ENCODE measurements at regions of chr12 and their contacts with region 1.

Region 1: GRCh38 chr12:67640863-67641262 is 7.7 kb upstream of the DYRK2 start:
- DNase-seq: no peak
- H3K4me3 ChIP-seq: no peak overlapping the region
- H3K4me3 Mint-ChIP-seq: no peak overlapping the region
- H3K27ac Mint-ChIP-seq: no peak overlapping the region
- H3K4me1 ChIP-seq: no peaks in the 10 kb centered on the region
- H3K4me1 Mint-ChIP-seq: no peaks in the 10 kb centered on the region
- H3K27me3 ChIP-seq: no peaks in the 10 kb centered on the region
- H3K27me3 Mint-ChIP-seq: peaks cover 6% of the 10 kb centered on the region
- CTCF ChIP-seq: no peak

Region 2: DNA sequence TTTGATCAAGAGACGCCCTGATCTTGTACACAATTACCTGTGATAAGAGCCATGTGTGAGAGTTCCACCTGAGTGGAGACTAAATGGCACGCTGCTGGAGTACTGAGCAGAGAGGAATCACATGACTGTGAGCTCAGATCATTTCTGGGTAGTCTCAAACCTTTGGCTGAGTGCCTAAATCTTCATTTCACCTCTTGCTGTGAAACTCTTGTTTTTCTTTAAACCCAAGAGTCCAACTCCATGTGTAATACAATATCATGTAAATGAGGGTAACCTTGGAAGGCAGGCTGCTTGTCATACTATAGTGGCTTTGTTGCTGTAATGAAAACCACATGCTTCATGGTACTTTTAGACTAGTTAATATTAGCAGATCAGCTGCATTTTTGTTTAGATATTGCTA is 214.8 kb before region 1 on chr12:
- CTCF ChIA-PET with region 1: no interaction called
- POLR2A ChIA-PET with region 1: no interaction called
- intact Hi-C with region 1: no loop called
- DNase-seq: no peak
- H3K4me3 ChIP-seq: no peak overlapping the region
- H3K4me3 Mint-ChIP-seq: no peak overlapping the region
- H3K27ac Mint-ChIP-seq: no peak overlapping the region
- H3K4me1 ChIP-seq: peaks cover 9% of the 10 kb centered on the region
- H3K4me1 Mint-ChIP-seq: no peaks in the 10 kb centered on the region
- H3K27me3 ChIP-seq: no peaks in the 10 kb centered on the region
- H3K27me3 Mint-ChIP-seq: no peaks in the 10 kb centered on the region
- CTCF ChIP-seq: no peak

Region 3: DNA sequence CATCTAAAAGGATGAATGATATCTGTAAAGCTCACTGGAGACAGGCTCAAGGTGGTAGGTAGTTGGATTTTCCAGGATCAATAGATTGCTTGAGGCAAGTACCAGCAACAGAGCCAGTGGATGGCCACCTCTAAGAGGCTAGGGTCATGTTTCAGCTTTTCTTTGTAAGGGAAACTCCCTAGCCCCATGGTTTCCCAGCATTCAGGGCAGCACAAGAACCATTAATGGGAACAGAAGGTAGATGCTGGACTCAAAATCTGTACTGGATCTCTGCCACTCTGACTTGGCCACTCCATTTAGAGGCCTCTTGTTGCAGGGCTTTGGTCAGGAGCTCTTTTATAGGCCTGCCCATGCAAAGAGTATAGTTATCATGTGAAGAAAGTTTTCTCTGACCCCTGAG is 68.4 kb before region 1 on chr12:
- CTCF ChIA-PET with region 1: no interaction called
- POLR2A ChIA-PET with region 1: no interaction called
- intact Hi-C with region 1: loop called (anchors 2 kb)
- DNase-seq: no peak
- H3K4me3 ChIP-seq: no peak overlapping the region
- H3K4me3 Mint-ChIP-seq: no peak overlapping the region
- H3K27ac Mint-ChIP-seq: no peak overlapping the region
- H3K4me1 ChIP-seq: no peaks in the 10 kb centered on the region
- H3K4me1 Mint-ChIP-seq: no peaks in the 10 kb centered on the region
- H3K27me3 ChIP-seq: no peaks in the 10 kb centered on the region
- H3K27me3 Mint-ChIP-seq: peaks cover 10% of the 10 kb centered on the region
- CTCF ChIP-seq: no peak

Region 4: GRCh38 chr12:67981287-67982162 is 340.7 kb after region 1 on chr12:
- CTCF ChIA-PET with region 1: no interaction called
- POLR2A ChIA-PET with region 1: no interaction called
- intact Hi-C with region 1: no loop called
- DNase-seq: no peak
- H3K4me3 ChIP-seq: no peak overlapping the region
- H3K4me3 Mint-ChIP-seq: no peak overlapping the region
- H3K27ac Mint-ChIP-seq: no peak overlapping the region
- H3K4me1 ChIP-seq: no peaks in the 10 kb centered on the region
- H3K4me1 Mint-ChIP-seq: no peaks in the 10 kb centered on the region
- H3K27me3 ChIP-seq: no peaks in the 10 kb centered on the region
- H3K27me3 Mint-ChIP-seq: peaks cover 15% of the 10 kb centered on the region
- CTCF ChIP-seq: no peak

Measured in Caco-2 (cell line).